Dorsolateral prefrontal cortex (tissue), 120 donors: ENCODE measurements at regions of chr16 and their contacts with region 1.

Region 1: DNA sequence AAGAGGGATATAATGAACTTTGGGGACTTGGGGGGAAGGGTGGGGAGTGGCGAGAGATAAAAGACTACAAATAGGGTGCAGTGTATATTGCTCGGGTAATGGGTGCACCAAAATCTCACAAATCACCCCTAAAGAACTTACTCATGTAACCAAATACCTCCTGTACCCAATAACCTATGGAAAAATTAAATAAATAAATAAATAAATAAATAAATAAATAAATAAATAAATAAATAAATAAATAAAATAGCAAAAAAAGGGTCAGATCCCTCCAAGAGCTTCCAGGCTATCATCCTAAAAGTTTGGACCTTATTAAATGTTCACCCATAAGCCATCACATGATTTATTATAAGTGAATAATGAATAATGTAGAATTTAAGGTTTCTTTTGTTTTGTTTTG is 636.1 kb upstream of the C16orf82 start:
- DNase-seq: no peak
- H3K4me3 ChIP-seq: no peak overlapping the region
- H3K27ac ChIP-seq: no peak overlapping the region
- H3K27me3 ChIP-seq: peaks cover 0 to 16% (median 0%) of the 10 kb centered on the region in 45 donors
- CTCF ChIP-seq: no peak

Region 2: DNA sequence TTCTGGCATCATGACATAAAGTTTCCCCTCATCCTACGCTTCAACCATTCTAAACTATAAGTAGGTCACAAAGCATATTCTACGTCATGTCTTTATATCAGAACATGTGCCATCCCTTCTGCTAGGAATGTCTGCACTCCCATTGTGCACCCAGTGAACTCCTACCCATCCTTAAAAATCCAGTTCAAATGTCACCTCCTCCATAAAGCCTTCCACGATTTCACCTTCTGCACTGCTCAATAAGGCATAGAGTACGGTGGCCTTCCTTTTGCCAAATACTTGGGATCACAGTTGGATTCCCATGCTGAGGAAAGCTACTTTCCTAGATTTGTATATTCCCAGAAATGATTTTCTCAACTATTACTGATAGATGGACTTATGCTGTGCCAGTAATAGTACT is 986.6 kb before region 1 on chr16:
- intact Hi-C with region 1: loop called in 1 of 2 experiments (anchors 10 kb)
- DNase-seq: no peak
- H3K4me3 ChIP-seq: no peak overlapping the region
- H3K27ac ChIP-seq: no peak overlapping the region
- H3K27me3 ChIP-seq: peaks cover 0 to 26% (median 0%) of the 10 kb centered on the region in 45 donors
- CTCF ChIP-seq: no peak

Region 3: DNA sequence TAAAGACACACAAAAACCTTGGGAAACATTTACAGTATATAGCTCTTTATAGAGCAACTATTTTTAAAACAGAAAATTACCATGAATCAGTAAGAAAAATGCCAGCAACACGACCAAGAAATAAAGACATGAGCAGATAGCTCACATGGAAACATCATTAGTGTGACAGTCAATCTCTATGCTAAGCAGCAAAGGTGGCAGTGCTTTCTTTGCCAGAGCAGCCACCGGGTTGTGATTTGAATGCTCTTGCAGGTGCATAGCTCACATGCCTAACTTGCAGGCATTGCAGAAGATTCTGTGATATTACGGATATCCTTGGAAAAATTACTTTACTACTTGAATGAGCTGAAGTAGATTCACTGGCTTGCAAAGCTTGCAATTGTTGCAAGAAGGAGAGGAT is 16.8 kb before region 1 on chr16:
- intact Hi-C with region 1: no loop called
- DNase-seq: no peak
- H3K4me3 ChIP-seq: no peak overlapping the region
- H3K27ac ChIP-seq: no peak overlapping the region
- H3K27me3 ChIP-seq: peaks cover 0 to 18% (median 0%) of the 10 kb centered on the region in 45 donors
- CTCF ChIP-seq: no peak